Activated CD4-positive, alpha-beta T cell treated with anti-CD3 and anti-CD28 coated beads for 36 hours (primary cell): ENCODE measurements at regions of chr2 and their contacts with region 1.

Region 1: GRCh38 chr2:68715353-68716041 is 19.1 kb upstream of the ARHGAP25 start:
- DNase-seq: peak; percentile 75
- ATAC-seq: no peak
- H3K4me3 Mint-ChIP-seq: no peak overlapping the region
- H3K27ac Mint-ChIP-seq: peak overlapping the region; percentile 79
- H3K4me1 Mint-ChIP-seq: peaks cover 75% of the 10 kb centered on the region
- H3K27me3 Mint-ChIP-seq: no peaks in the 10 kb centered on the region

Region 2: GRCh38 chr2:68594674-68595492 is 120.6 kb before region 1 on chr2:
- CTCF ChIA-PET with region 1: interaction called, 6 read pairs
- POLR2A ChIA-PET with region 1: no interaction called
- intact Hi-C with region 1: loop called in 1 of 2 experiments (anchors 5 kb)
- DNase-seq: peak; percentile 72
- ATAC-seq: peak; percentile 49
- H3K4me3 Mint-ChIP-seq: no peak overlapping the region
- H3K27ac Mint-ChIP-seq: no peak overlapping the region
- H3K4me1 Mint-ChIP-seq: peaks cover 6% of the 10 kb centered on the region
- H3K27me3 Mint-ChIP-seq: peaks cover 9% of the 10 kb centered on the region

Region 3: GRCh38 chr2:68726608-68727367 is 11.3 kb after region 1 on chr2:
- CTCF ChIA-PET with region 1: interaction called, 20 read pairs
- POLR2A ChIA-PET with region 1: no interaction called
- intact Hi-C with region 1: loop called (anchors 1 kb)
- DNase-seq: peak; percentile 90
- ATAC-seq: peak; percentile 95
- H3K4me3 Mint-ChIP-seq: peak overlapping the region; percentile 19
- H3K27ac Mint-ChIP-seq: peak overlapping the region; percentile 82
- H3K4me1 Mint-ChIP-seq: peaks cover 72% of the 10 kb centered on the region
- H3K27me3 Mint-ChIP-seq: no peaks in the 10 kb centered on the region

Region 4: DNA sequence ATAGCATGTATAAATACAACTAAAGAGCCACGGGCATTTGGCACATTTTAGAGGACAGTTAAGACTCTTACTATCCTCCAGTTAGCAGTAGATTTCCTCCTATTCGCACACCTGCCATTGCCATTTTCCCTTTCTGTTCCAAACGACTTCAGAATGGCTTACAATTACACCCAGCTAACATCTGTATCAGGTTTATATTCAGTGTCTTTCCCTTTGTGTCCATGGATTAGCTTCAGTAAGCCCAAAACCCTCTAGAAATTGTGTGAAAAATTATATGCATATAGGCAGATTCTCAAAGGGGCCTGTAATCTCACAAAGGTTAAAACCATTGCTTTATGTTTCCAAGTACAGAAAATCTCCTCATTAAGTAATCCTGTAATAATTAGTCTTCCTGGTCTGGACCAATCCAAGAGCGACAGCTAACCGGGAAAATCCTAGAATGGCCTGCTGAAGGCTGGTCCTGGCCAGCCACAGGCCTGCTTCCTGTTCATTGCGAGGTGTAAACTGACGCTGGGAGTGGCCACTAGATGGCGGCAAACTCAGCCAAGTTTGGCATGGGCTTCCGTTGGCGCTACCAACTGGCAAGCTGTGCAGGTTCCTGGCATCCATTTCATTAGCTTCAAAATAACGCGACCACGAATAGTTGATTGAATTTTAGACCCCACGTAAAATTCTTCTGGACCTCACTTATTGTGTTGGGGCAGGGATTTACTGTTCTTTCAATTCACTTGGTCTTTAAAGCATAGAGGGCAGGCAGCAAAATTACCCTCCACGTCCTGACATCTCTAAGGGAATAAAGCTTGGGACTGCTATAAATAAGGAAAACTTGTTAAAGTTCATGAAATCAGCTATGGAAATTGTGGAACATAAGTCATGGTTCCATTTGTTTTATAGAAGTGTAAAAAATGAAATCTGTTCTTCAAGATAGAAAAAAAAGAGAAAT is 36.2 kb after region 1 on chr2:
- CTCF ChIA-PET with region 1: interaction called, 261 read pairs
- POLR2A ChIA-PET with region 1: no interaction called
- intact Hi-C with region 1: loop called in 1 of 2 experiments (anchors 5 kb)
- DNase-seq: peak; percentile 96
- ATAC-seq: peak; percentile 93
- H3K4me3 Mint-ChIP-seq: peak overlapping the region; percentile 20
- H3K27ac Mint-ChIP-seq: peak overlapping the region; percentile 84
- H3K4me1 Mint-ChIP-seq: peaks cover 87% of the 10 kb centered on the region
- H3K27me3 Mint-ChIP-seq: no peaks in the 10 kb centered on the region

Region 5: DNA sequence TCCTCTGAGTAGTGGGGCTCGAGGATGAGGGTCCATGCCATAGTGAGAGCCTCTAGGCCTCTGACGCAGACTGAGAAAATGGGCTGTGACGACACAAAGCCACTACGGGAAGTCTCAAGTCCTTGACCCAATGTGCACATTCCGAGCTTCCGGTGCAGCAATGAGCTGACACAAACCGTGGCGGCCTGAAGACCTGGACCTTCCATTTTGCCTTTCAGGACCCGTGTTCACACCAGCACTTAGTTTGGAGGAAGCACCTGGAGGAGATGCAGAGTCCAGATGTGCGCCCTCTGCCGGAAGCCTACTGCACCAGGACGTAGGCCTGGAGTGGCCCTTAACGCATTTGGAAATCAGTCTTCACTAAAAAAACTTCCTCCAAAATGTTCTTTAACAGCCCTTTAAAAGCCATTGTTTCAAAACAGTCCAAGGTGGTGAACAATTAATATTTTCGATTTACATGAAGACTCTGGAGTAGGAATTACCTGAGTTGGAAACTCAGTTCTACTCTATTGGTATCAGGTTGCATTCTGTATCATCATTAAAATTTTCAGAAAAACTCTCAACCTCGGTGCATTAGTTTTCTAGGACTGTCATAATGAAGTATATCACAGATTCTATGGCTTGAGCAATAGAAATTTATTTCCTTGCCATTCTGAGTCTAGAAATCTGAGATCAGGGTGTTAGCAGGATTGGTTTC is 121.8 kb after region 1 on chr2:
- CTCF ChIA-PET with region 1: interaction called, 6 read pairs
- POLR2A ChIA-PET with region 1: no interaction called
- intact Hi-C with region 1: loop called in 1 of 2 experiments (anchors 1 kb)
- DNase-seq: peak; percentile 84
- ATAC-seq: peak; percentile 45
- H3K4me3 Mint-ChIP-seq: no peak overlapping the region
- H3K27ac Mint-ChIP-seq: peak overlapping the region; percentile 79
- H3K4me1 Mint-ChIP-seq: peaks cover 39% of the 10 kb centered on the region
- H3K27me3 Mint-ChIP-seq: no peaks in the 10 kb centered on the region